Pancreas (tissue), 10 donors: ENCODE measurements at regions of chr17 and their contacts with region 1.

Region 1: GRCh38 chr17:17001874-17002520 is 30.1 kb upstream of the TNFRSF13B start:
- DNase-seq: peak; percentile 69 to 96 (median 86)
- ATAC-seq: peak; percentile 91 to 98 (median 94)
- H3K4me3 ChIP-seq: no peak overlapping the region
- H3K27ac ChIP-seq: no peak overlapping the region
- H3K4me1 ChIP-seq: no peaks in the 10 kb centered on the region
- H3K27me3 ChIP-seq: no peaks in the 10 kb centered on the region
- CTCF ChIP-seq: peak; percentile 89 to 95 (median 94)

Region 2: DNA sequence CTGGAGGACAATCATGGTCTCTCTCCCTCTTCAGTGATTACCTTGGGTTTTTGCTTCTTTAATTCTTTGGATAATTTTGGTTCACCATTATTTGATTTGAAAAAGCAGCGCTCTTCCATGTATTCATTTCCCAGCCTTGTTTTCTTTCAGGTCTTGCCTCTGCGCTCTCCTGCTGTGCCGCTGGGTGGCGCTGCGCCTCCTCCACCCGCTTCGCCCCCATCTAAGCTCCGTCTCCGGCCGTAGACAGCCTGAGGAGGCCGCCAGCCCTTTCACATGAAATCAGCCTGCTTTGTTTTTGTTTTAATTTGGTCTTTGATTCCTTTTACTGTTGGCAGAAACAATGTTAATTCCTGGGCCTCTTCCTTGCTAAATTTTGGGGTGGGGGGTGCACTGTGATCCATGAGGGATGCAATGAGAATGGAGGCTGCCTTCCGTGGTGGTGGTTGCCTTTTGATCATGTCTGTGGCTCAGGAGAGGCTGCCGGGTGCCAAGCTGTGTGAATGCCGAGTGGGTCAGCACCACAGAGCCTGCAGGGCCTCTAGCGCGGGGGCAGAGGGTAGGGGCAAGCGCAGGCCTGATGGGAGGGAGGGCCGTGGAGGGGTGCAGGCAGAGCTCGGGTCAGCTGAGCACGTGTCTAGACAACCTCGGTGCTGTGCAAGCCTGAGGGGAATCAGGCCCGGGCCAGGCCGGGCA is 140.0 kb after region 1 on chr17:
- intact Hi-C with region 1: loop called in 1 of 3 experiments (anchors 10 kb)
- DNase-seq: peak in 2 of 6 donors; percentile 22 to 70
- ATAC-seq: peak in 2 of 4 donors; percentile 41 to 51
- H3K4me3 ChIP-seq: no peak overlapping the region
- H3K27ac ChIP-seq: no peak overlapping the region
- H3K4me1 ChIP-seq: no peaks in the 10 kb centered on the region
- H3K27me3 ChIP-seq: no peaks in the 10 kb centered on the region
- CTCF ChIP-seq: peak in 3 of 4 donors; percentile 20 to 41 (median 33)

Region 3: DNA sequence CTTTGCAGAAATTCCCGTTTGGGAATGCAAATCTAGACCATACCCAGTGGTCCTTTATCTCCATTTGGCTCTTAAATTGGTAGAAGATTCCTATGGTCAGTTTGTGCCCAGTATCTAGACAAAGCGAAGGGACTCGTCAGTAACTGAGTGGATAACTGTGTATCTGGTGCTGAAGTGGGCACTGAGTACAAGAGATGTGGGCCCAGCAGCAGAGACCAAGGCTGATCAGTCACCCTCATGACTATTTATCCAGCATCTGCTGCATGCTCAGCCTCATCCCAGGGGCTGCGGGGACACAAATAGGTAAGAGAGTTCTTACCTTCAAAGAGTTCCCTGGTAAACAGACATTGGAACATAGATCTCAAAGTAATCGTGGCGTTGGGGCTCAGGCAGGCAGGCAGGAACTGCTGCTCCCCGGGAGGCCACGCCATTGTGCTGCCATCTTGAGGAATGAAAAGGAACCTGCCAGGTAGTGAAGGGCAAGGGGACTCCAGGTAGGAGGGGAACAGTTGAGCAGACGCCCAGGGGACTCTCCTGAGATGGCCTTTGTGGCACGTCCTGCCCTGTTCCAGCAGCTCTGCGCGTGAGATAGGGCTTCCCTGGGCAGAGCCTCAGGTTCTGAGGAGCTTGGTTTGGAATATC is 311.5 kb after region 1 on chr17:
- intact Hi-C with region 1: loop called in 1 of 3 experiments (anchors 5 kb)
- DNase-seq: peak; percentile 46 to 82 (median 66)
- ATAC-seq: peak; percentile 80 to 99 (median 96)
- H3K4me3 ChIP-seq: no peak overlapping the region
- H3K27ac ChIP-seq: no peak overlapping the region
- H3K4me1 ChIP-seq: no peaks in the 10 kb centered on the region
- H3K27me3 ChIP-seq: no peaks in the 10 kb centered on the region
- CTCF ChIP-seq: peak; percentile 39 to 63 (median 52)